A549 (cell line): ENCODE measurements at regions of chr11 and their contacts with region 1.

Region 1: GRCh38 chr11:62694455-62695167 is 5.3 kb upstream of the LRRN4CL start:
- DNase-seq: peak; percentile 68 to 87
- ATAC-seq: peak; percentile 75 to 88
- H3K4me3 ChIP-seq: no peak overlapping the region
- H3K27ac ChIP-seq: no peak overlapping the region
- H3K4me1 ChIP-seq: peaks cover 2% of the 10 kb centered on the region; the same call in 1 of the 3 replicates
- CTCF ChIP-seq: peak; percentile 61
- EP300 ChIP-seq: no peak
- POLR2A ChIP-seq: no peak
- RAD21 ChIP-seq: peak; percentile 52 to 63

Region 2: DNA sequence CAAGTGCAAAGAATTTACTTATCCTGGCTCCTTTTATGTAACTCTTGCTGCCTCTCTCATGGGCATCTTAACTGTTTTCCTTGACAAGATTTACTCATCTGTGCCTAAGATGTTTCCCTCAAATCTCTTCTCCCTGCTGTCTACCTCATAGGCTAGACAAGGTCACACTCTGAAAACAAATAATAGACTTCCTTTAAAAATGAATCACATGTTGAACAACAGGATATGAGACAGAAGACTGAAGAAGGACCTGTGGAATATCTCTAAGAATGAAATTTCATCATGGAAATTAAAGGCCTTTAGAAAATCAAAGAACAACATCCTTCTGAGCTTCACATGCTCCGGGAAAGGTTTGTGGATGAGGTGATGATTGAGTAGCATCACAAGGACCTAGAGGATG is 430.6 kb before region 1 on chr11:
- CTCF ChIA-PET with region 1: no interaction called
- POLR2A ChIA-PET with region 1: no interaction called
- DNase-seq: no peak
- ATAC-seq: no peak
- H3K4me3 ChIP-seq: no peak overlapping the region
- H3K27ac ChIP-seq: no peak overlapping the region
- H3K4me1 ChIP-seq: no peaks in the 10 kb centered on the region
- CTCF ChIP-seq: no peak
- EP300 ChIP-seq: no peak
- POLR2A ChIP-seq: no peak
- RAD21 ChIP-seq: no peak

Region 3: DNA sequence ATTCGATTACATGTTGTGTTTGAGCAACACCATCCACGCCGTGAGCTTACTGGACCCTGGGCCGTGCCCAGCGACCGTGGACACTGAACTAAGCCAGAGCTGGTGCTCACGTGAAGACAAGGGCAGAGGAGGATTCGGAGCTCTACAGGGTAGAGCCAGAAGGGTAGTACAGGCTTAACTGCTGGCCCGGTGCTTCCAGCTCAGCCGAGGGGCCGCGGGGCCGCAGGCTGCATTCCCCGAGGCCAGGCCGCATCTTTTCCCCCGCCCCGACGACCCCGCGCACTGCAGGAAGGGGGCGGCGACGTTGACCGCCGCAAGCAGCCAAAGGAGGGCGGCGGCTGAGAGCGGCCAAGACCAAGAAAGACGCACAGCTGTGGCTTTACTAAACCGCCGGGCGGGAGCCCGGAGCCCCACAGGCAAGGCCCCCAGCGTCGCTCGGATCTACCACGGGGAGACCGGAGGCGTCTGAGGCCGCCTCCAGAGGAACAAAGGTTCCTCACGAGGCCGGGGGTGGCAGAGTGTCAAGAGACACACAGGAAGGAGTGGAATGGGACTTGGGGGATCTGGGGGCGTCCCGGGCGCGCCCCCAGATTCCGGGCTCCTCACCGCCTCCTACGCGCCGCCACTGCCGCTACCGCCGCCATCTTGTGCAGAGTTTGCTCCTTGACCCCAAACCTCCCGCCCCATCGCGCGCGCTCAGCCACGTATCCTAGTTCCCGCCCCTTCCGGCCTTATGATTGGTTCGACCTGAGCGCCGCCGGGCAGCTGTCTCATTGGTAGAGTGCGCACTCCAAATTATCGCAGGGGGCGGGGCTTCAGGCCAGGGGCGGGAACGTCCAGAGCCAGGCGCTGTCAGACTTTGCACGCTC is 48.4 kb before region 1 on chr11 and contains the start of gene GANAB:
- CTCF ChIA-PET with region 1: no interaction called
- POLR2A ChIA-PET with region 1: no interaction called
- DNase-seq: peak; percentile 97 to 99
- ATAC-seq: peak; percentile 97 to 99
- H3K4me3 ChIP-seq: peak within 1 kb of the TSS; percentile 79
- H3K27ac ChIP-seq: peak within 1 kb of the TSS; percentile 94 to 97
- H3K4me1 ChIP-seq: peaks cover 11% of the 10 kb centered on the region
- CTCF ChIP-seq: no peak
- EP300 ChIP-seq: no peak
- POLR2A ChIP-seq: peak; percentile 89
- RAD21 ChIP-seq: no peak
- polyA plus RNA-seq, gene GANAB: 215 and 308 TPM in 2 replicates

Region 4: DNA sequence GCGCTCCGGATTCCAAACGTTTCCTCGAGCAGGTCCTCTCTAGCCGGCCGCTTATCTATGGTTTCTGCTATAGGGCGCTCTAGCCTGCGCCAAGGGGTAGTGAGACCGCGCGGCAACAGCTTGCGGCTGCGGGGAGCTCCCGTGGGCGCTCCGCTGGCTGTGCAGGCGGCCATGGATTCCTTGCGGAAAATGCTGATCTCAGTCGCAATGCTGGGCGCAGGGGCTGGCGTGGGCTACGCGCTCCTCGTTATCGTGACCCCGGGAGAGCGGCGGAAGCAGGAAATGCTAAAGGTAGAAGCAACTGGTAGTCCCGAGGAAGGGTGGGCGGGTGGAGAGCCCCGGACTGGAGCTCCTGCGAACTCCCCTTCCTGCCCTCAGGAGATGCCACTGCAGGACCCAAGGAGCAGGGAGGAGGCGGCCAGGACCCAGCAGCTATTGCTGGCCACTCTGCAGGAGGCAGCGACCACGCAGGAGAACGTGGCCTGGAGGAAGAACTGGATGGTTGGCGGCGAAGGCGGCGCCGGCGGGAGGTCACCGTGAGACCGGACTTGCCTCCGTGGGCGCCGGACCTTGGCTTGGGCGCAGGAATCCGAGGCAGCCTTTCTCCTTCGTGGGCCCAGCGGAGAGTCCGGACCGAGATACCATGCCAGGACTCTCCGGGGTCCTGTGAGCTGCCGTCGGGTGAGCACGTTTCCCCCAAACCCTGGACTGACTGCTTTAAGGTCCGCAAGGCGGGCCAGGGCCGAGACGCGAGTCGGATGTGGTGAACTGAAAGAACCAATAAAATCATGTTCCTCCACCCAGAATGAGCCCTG is 22.8 kb before region 1 on chr11 and contains the starts of genes LBHD1 and UQCC3:
- CTCF ChIA-PET with region 1: interaction called, 72 read pairs
- POLR2A ChIA-PET with region 1: interaction called, 5 read pairs
- DNase-seq: peak; percentile 86 to 92
- ATAC-seq: peak; percentile 81 to 86
- H3K4me3 ChIP-seq: peak within 1 kb of the TSS; percentile 90
- H3K27ac ChIP-seq: peak within 1 kb of the TSS; percentile 97 to 98
- H3K4me1 ChIP-seq: peaks cover 31% of the 10 kb centered on the region
- CTCF ChIP-seq: no peak
- EP300 ChIP-seq: no peak
- POLR2A ChIP-seq: peak; percentile 72
- RAD21 ChIP-seq: no peak
- polyA plus RNA-seq, gene LBHD1: 4.1 and 5.3 TPM in 2 replicates
- polyA plus RNA-seq, gene UQCC3: 13.9 and 20.2 TPM in 2 replicates

Region 5: GRCh38 chr11:62678770-62679696 is 15.6 kb before region 1 on chr11 and contains the start of gene UBXN1:
- CTCF ChIA-PET with region 1: interaction called, 126 read pairs
- POLR2A ChIA-PET with region 1: interaction called, 5 read pairs
- DNase-seq: peak; percentile 87 to 92
- ATAC-seq: peak; percentile 84 to 86
- H3K4me3 ChIP-seq: peak within 1 kb of the TSS; percentile 67
- H3K27ac ChIP-seq: peak within 1 kb of the TSS; percentile 87 to 92
- H3K4me1 ChIP-seq: peaks cover 24% of the 10 kb centered on the region
- CTCF ChIP-seq: no peak
- EP300 ChIP-seq: no peak
- POLR2A ChIP-seq: peak; percentile 57
- RAD21 ChIP-seq: no peak
- polyA plus RNA-seq, gene UBXN1: 56.8 and 120 TPM in 2 replicates

Region 6: GRCh38 chr11:62705880-62706849 is 11.6 kb after region 1 on chr11:
- CTCF ChIA-PET with region 1: interaction called, 37 read pairs
- POLR2A ChIA-PET with region 1: interaction called, 3 read pairs
- DNase-seq: peak; percentile 87 to 90
- ATAC-seq: peak; percentile 73 to 87
- H3K4me3 ChIP-seq: peak overlapping the region; percentile 69
- H3K27ac ChIP-seq: peak overlapping the region; percentile 80 to 92
- H3K4me1 ChIP-seq: peaks cover 26% of the 10 kb centered on the region
- CTCF ChIP-seq: no peak
- EP300 ChIP-seq: no peak
- POLR2A ChIP-seq: peak; percentile 66
- RAD21 ChIP-seq: no peak

Region 7: GRCh38 chr11:62965574-62965973 is 271.0 kb after region 1 on chr11:
- CTCF ChIA-PET with region 1: no interaction called
- POLR2A ChIA-PET with region 1: no interaction called
- DNase-seq: no peak
- ATAC-seq: no peak
- H3K4me3 ChIP-seq: no peak overlapping the region
- H3K27ac ChIP-seq: no peak overlapping the region
- H3K4me1 ChIP-seq: no peaks in the 10 kb centered on the region
- CTCF ChIP-seq: no peak
- EP300 ChIP-seq: no peak
- POLR2A ChIP-seq: no peak
- RAD21 ChIP-seq: no peak